ENCODE measurements at regions of chr7 and their contacts with region 1.

Region 1: GRCh38 chr7:33764752-33765451 is 140.4 kb upstream of the BMPER start:
- DNase-seq: no peak
- H3K4me3 ChIP-seq: no peak overlapping the region
- H3K27ac ChIP-seq: no peak overlapping the region
- H3K4me1 ChIP-seq: no peaks in the 10 kb centered on the region
- H3K27me3 ChIP-seq: no peaks in the 10 kb centered on the region
- CTCF ChIP-seq: no peak

Region 2: GRCh38 chr7:33243319-33243881 is 521.5 kb before region 1 on chr7:
- intact Hi-C with region 1: loop called (anchors 10 kb)
- DNase-seq: no peak
- H3K4me3 ChIP-seq: no peak overlapping the region
- H3K27ac ChIP-seq: no peak overlapping the region
- H3K4me1 ChIP-seq: no peaks in the 10 kb centered on the region
- H3K27me3 ChIP-seq: no peaks in the 10 kb centered on the region
- CTCF ChIP-seq: no peak

Region 3: GRCh38 chr7:33707427-33707826 is 57.5 kb before region 1 on chr7:
- intact Hi-C with region 1: no loop called
- DNase-seq: no peak
- H3K4me3 ChIP-seq: no peak overlapping the region
- H3K27ac ChIP-seq: no peak overlapping the region
- H3K4me1 ChIP-seq: peaks cover 4% of the 10 kb centered on the region
- H3K27me3 ChIP-seq: no peaks in the 10 kb centered on the region
- CTCF ChIP-seq: no peak